Endothelial cell of umbilical vein (primary cell): ENCODE measurements at regions of chr9 and their contacts with region 1.

Region 1: GRCh38 chr9:32550562-32551433 is 1.3 kb upstream of the SMIM27 start:
- DNase-seq: peak; percentile 98
- H3K4me3 ChIP-seq: peak overlapping the region; percentile 71 to 88 (median 77)
- H3K27ac ChIP-seq: peak overlapping the region; percentile 92
- H3K4me1 ChIP-seq: peaks cover 17% of the 10 kb centered on the region
- H3K27me3 ChIP-seq: no peaks in the 10 kb centered on the region
- CTCF ChIP-seq: peak in 1 of 2 donors; percentile 22
- POLR2A ChIP-seq: no peak

Region 2: DNA sequence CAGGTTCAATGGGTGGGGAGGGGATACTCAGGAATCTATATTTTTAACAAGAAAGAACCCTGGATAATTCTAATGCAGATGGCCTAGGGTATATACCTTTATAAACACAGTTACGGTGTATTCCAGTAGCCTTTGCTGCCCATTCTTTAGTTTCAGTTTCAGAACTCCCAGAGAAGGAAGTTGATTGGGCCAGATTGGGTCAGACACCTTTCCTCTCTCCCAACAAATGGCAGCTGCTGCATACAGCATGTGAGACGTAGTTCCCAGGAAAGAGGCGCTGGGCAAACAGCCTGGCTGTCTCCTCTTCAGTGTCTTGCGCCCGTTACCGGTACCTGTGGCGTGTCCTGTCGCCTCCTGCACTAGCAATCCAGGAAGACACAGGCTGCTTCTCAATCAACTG is 145.9 kb before region 1 on chr9:
- CTCF ChIA-PET with region 1: no interaction called
- POLR2A ChIA-PET with region 1: no interaction called
- dilution Hi-C with region 1: no loop called
- intact Hi-C with region 1: no loop called
- DNase-seq: no peak
- H3K4me3 ChIP-seq: no peak overlapping the region
- H3K27ac ChIP-seq: no peak overlapping the region
- H3K4me1 ChIP-seq: peaks cover 3% of the 10 kb centered on the region
- H3K27me3 ChIP-seq: no peaks in the 10 kb centered on the region
- CTCF ChIP-seq: no peak
- POLR2A ChIP-seq: no peak

Region 3: DNA sequence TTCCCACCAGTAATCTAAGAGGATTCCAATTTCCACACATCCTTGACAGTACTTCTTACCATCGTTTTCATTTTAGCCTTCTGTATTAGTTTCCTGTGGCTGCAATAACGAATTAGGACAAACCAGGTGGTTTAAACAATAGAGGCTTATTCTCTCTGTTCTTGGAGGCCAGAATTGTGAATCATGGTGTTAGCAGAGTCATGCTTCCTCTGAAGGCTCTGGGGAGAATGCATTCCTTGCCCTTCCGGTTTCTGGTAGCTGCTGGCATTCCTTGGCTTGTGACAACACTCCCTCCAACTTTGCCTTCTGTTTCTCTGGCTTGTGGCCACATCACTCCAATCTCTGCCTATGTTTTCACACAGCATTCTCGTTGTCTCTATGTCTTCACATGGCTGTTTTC is 48.3 kb before region 1 on chr9:
- CTCF ChIA-PET with region 1: no interaction called
- POLR2A ChIA-PET with region 1: no interaction called
- dilution Hi-C with region 1: no loop called
- intact Hi-C with region 1: loop called (anchors 1 kb)
- DNase-seq: peak; percentile 85
- H3K4me3 ChIP-seq: no peak overlapping the region
- H3K27ac ChIP-seq: peak overlapping the region; percentile 90
- H3K4me1 ChIP-seq: peaks cover 42% of the 10 kb centered on the region
- H3K27me3 ChIP-seq: no peaks in the 10 kb centered on the region
- CTCF ChIP-seq: no peak
- POLR2A ChIP-seq: no peak

Region 4: GRCh38 chr9:32571969-32572899 is 21.4 kb after region 1 on chr9:
- CTCF ChIA-PET with region 1: interaction called, 23 read pairs
- POLR2A ChIA-PET with region 1: no interaction called
- dilution Hi-C with region 1: no loop called
- intact Hi-C with region 1: loop called (anchors 1 kb)
- DNase-seq: peak; percentile 88
- H3K4me3 ChIP-seq: peak overlapping the region; percentile 78 to 89 (median 88)
- H3K27ac ChIP-seq: peak overlapping the region; percentile 19
- H3K4me1 ChIP-seq: peaks cover 18% of the 10 kb centered on the region
- H3K27me3 ChIP-seq: peaks cover 0 to 4% of the 10 kb centered on the region in 2 experiments
- CTCF ChIP-seq: peak; percentile 74 to 80
- POLR2A ChIP-seq: no peak

Region 5: GRCh38 chr9:32635362-32635761 is 84.6 kb after region 1 on chr9 and contains the start of gene TAF1L:
- CTCF ChIA-PET with region 1: no interaction called
- POLR2A ChIA-PET with region 1: no interaction called
- dilution Hi-C with region 1: no loop called
- intact Hi-C with region 1: no loop called
- DNase-seq: no peak
- H3K4me3 ChIP-seq: no peak within 1 kb of the TSS
- H3K27ac ChIP-seq: no peak within 1 kb of the TSS
- H3K4me1 ChIP-seq: no peaks in the 10 kb centered on the region
- H3K27me3 ChIP-seq: peaks cover 0 to 3% of the 10 kb centered on the region in 2 experiments
- CTCF ChIP-seq: no peak
- POLR2A ChIP-seq: no peak
- total RNA-seq, gene TAF1L: not detected in 2 replicates